ENCODE measurements at regions of chr9 and their contacts with region 1.

Region 1: GRCh38 chr9:130693426-130694191 is at the start of gene EXOSC2:
- DNase-seq: peak; percentile 87 to 99 (median 97)
- H3K4me3 ChIP-seq: peak within 1 kb of the TSS; percentile 98
- H3K4me3 Mint-ChIP-seq: peak within 1 kb of the TSS; percentile 89 to 99 (median 97)
- H3K27ac ChIP-seq: peak within 1 kb of the TSS; percentile 84
- H3K27ac Mint-ChIP-seq: peak within 1 kb of the TSS; percentile 71 to 98 (median 94)
- H3K4me1 ChIP-seq: peaks cover 21% of the 10 kb centered on the region
- H3K4me1 Mint-ChIP-seq: peaks cover 37 to 52% (median 50%) of the 10 kb centered on the region in 3 donors
- H3K27me3 ChIP-seq: no peaks in the 10 kb centered on the region
- H3K27me3 Mint-ChIP-seq: peaks cover 0 to 1% of the 10 kb centered on the region in 2 donors
- total RNA-seq, gene EXOSC2: 83.5 to 88.4 TPM

Region 2: DNA sequence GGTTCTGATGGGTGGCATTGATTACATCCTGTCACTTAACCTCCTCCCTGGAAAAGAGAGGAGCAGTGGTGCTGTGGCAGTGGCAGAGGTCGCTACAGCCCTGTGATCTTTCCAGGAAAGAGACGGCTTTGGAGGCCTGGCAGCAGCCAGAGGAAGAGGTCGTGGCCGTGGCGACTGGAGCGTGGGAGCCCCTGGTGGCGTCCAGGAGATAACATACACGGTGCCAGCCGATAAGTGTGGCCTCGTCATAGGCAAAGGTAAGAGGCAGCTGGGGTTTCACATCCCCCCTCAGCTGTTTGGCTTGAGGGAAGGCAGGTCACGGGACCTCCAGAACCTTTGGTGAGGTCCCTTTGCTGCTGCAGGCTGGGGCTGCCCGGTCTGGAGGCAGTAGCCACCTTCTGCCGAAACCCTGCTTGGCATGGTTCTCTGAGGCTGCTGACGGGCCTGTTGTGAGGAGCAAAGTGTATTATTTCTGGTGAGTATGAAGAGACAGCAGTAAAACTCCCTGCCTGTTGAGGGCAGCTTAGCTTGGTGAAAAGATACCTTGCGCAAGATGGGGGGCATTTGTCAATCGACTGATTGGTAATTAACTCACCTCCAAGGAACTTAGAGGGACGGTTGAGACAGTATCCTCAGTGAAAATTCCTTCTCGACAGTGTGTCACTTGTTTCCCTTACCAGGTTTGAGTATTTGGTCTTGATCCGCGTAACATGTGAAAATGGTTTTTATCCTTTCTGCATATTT is 67.2 kb before region 1 on chr9:
- CTCF ChIA-PET with region 1: no interaction called
- POLR2A ChIA-PET with region 1: no interaction called
- DNase-seq: no peak
- H3K4me3 ChIP-seq: no peak overlapping the region
- H3K4me3 Mint-ChIP-seq: no peak overlapping the region
- H3K27ac ChIP-seq: no peak overlapping the region
- H3K27ac Mint-ChIP-seq: no peak overlapping the region
- H3K4me1 ChIP-seq: no peaks in the 10 kb centered on the region
- H3K4me1 Mint-ChIP-seq: no peaks in the 10 kb centered on the region
- H3K27me3 ChIP-seq: no peaks in the 10 kb centered on the region
- H3K27me3 Mint-ChIP-seq: no peaks in the 10 kb centered on the region

Region 3: GRCh38 chr9:130682490-130683121 is 11.0 kb before region 1 on chr9:
- CTCF ChIA-PET with region 1: interaction called, 18 read pairs
- POLR2A ChIA-PET with region 1: interaction called, 7 read pairs
- DNase-seq: peak; percentile 35 to 62 (median 52)
- H3K4me3 ChIP-seq: peak overlapping the region; percentile 87
- H3K4me3 Mint-ChIP-seq: peak overlapping the region; percentile 84 to 97 (median 94)
- H3K27ac ChIP-seq: no peak overlapping the region
- H3K27ac Mint-ChIP-seq: peak overlapping the region in 5 of 8 donors; percentile 64 to 96 (median 83)
- H3K4me1 ChIP-seq: no peaks in the 10 kb centered on the region
- H3K4me1 Mint-ChIP-seq: peaks cover 3 to 12% (median 8%) of the 10 kb centered on the region in 3 donors
- H3K27me3 ChIP-seq: no peaks in the 10 kb centered on the region
- H3K27me3 Mint-ChIP-seq: peaks cover 3 to 4% of the 10 kb centered on the region in 2 donors

Region 4: GRCh38 chr9:130707225-130707976 is 13.8 kb after region 1 on chr9:
- CTCF ChIA-PET with region 1: interaction called, 39 read pairs
- POLR2A ChIA-PET with region 1: interaction called, 4 read pairs
- DNase-seq: peak; percentile 55 to 77 (median 62)
- H3K4me3 ChIP-seq: no peak overlapping the region
- H3K4me3 Mint-ChIP-seq: no peak overlapping the region
- H3K27ac ChIP-seq: no peak overlapping the region
- H3K27ac Mint-ChIP-seq: peak overlapping the region in 3 of 8 donors; percentile 38 to 55 (median 53)
- H3K4me1 ChIP-seq: peaks cover 6% of the 10 kb centered on the region
- H3K4me1 Mint-ChIP-seq: peaks cover 6 to 12% (median 7%) of the 10 kb centered on the region in 3 donors
- H3K27me3 ChIP-seq: no peaks in the 10 kb centered on the region
- H3K27me3 Mint-ChIP-seq: no peaks in the 10 kb centered on the region

Region 5: DNA sequence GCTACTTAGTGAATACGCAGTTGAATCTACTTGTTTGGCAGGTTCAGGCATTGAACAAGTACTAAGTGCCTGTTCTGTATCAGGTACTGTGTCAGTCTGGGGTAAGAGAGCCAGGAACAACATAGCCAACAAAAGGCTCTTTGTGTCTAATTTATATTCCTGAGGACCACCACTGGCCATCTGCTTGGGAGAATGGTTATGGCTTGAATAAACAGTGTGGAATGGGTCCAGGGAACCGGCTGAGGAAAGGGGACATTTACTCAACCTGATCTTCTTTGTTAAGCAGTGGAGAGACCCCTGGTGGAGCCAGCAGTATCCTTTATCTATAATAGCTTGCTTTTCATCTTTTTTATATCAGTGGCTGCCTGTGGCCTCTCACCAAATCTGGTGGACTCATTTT is 38.5 kb after region 1 on chr9:
- CTCF ChIA-PET with region 1: no interaction called
- POLR2A ChIA-PET with region 1: no interaction called
- DNase-seq: no peak
- H3K4me3 ChIP-seq: no peak overlapping the region
- H3K4me3 Mint-ChIP-seq: no peak overlapping the region
- H3K27ac ChIP-seq: no peak overlapping the region
- H3K27ac Mint-ChIP-seq: peak overlapping the region in 3 of 8 donors; percentile 51 to 57 (median 51)
- H3K4me1 ChIP-seq: no peaks in the 10 kb centered on the region
- H3K4me1 Mint-ChIP-seq: peaks cover 25 to 39% (median 32%) of the 10 kb centered on the region in 3 donors
- H3K27me3 ChIP-seq: no peaks in the 10 kb centered on the region
- H3K27me3 Mint-ChIP-seq: no peaks in the 10 kb centered on the region

Region 6: GRCh38 chr9:131167146-131167692 is 473.6 kb after region 1 on chr9:
- CTCF ChIA-PET with region 1: no interaction called
- POLR2A ChIA-PET with region 1: no interaction called
- DNase-seq: no peak
- H3K4me3 ChIP-seq: no peak overlapping the region
- H3K4me3 Mint-ChIP-seq: no peak overlapping the region
- H3K27ac ChIP-seq: no peak overlapping the region
- H3K27ac Mint-ChIP-seq: peak overlapping the region in 2 of 8 donors; percentile 7 to 20
- H3K4me1 ChIP-seq: no peaks in the 10 kb centered on the region
- H3K4me1 Mint-ChIP-seq: peaks cover 6 to 12% (median 9%) of the 10 kb centered on the region in 3 donors
- H3K27me3 ChIP-seq: no peaks in the 10 kb centered on the region
- H3K27me3 Mint-ChIP-seq: no peaks in the 10 kb centered on the region

Region 7: GRCh38 chr9:131747356-131747755 is 1053.7 kb after region 1 on chr9:
- CTCF ChIA-PET with region 1: no interaction called
- POLR2A ChIA-PET with region 1: interaction called, 12 read pairs
- DNase-seq: peak in 1 of 5 donors; percentile 39
- H3K4me3 ChIP-seq: no peak overlapping the region
- H3K4me3 Mint-ChIP-seq: no peak overlapping the region
- H3K27ac ChIP-seq: no peak overlapping the region
- H3K27ac Mint-ChIP-seq: peak overlapping the region in 2 of 8 donors; percentile 33 to 57
- H3K4me1 ChIP-seq: peaks cover 27% of the 10 kb centered on the region
- H3K4me1 Mint-ChIP-seq: peaks cover 22 to 38% (median 37%) of the 10 kb centered on the region in 3 donors
- H3K27me3 ChIP-seq: no peaks in the 10 kb centered on the region
- H3K27me3 Mint-ChIP-seq: peaks cover 0 to 2% of the 10 kb centered on the region in 2 donors